ENCODE measurements at regions of chr17 and their contacts with region 1.

Region 1: DNA sequence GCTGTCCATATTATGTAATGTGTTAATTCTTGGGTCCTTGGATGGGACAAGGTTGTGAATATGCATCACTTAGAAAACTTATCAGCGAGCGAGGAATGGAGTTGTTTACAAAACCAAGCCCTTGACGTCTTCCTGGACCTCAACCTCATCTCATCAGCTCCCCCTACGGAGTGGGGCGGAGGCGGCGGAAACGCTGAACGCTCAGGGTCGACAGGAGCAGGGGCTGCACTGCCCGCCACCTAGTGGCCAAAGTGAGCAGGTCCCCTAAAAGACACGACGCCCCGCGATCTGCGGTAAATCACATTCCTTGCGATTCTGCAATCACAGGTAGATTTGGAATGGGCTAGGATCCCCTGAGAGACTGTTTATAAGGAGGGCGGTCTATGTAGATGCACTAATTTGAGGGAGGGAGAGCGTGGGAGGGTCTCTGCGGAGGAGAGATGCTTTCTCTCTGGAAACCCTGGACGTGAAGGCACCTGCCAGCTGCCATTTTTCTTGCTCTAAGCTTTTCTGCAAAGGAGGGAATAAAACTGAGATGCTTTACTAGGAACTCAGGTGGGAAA is 5.4 kb upstream of the ICAM2 start:
- DNase-seq: peak; percentile 89 to 98
- ATAC-seq: peak; percentile 70 to 90 (median 78)
- H3K4me3 ChIP-seq: peak overlapping the region; percentile 7
- H3K4me3 Mint-ChIP-seq: peak overlapping the region; percentile 93
- H3K27ac ChIP-seq: peak overlapping the region; percentile 96
- H3K27ac Mint-ChIP-seq: peak overlapping the region; percentile 98 to 100
- H3K4me1 ChIP-seq: peaks cover 56% of the 10 kb centered on the region
- H3K4me1 Mint-ChIP-seq: peaks cover 48 to 51% of the 10 kb centered on the region in 2 donors
- H3K27me3 ChIP-seq: no peaks in the 10 kb centered on the region
- H3K27me3 Mint-ChIP-seq: no peaks in the 10 kb centered on the region
- CTCF ChIP-seq: peak; percentile 97

Region 2: GRCh38 chr17:62755141-62755851 is 1270.5 kb before region 1 on chr17:
- intact Hi-C with region 1: no loop called
- DNase-seq: no peak
- ATAC-seq: no peak
- H3K4me3 ChIP-seq: no peak overlapping the region
- H3K4me3 Mint-ChIP-seq: no peak overlapping the region
- H3K27ac ChIP-seq: no peak overlapping the region
- H3K27ac Mint-ChIP-seq: no peak overlapping the region
- H3K4me1 ChIP-seq: no peaks in the 10 kb centered on the region
- H3K4me1 Mint-ChIP-seq: no peaks in the 10 kb centered on the region
- H3K27me3 ChIP-seq: no peaks in the 10 kb centered on the region
- H3K27me3 Mint-ChIP-seq: peaks cover 0 to 3% of the 10 kb centered on the region in 2 donors
- CTCF ChIP-seq: no peak

Region 3: GRCh38 chr17:63760771-63761539 is 264.9 kb before region 1 on chr17:
- intact Hi-C with region 1: no loop called
- DNase-seq: no peak
- ATAC-seq: no peak
- H3K4me3 ChIP-seq: no peak overlapping the region
- H3K4me3 Mint-ChIP-seq: no peak overlapping the region
- H3K27ac ChIP-seq: no peak overlapping the region
- H3K27ac Mint-ChIP-seq: peak overlapping the region in 1 of 2 donors; percentile 19
- H3K4me1 ChIP-seq: peaks cover 3% of the 10 kb centered on the region
- H3K4me1 Mint-ChIP-seq: peaks cover 8 to 9% of the 10 kb centered on the region in 2 donors
- H3K27me3 ChIP-seq: no peaks in the 10 kb centered on the region
- H3K27me3 Mint-ChIP-seq: no peaks in the 10 kb centered on the region
- CTCF ChIP-seq: no peak

Region 4: GRCh38 chr17:63946440-63947367 is 79.1 kb before region 1 on chr17:
- intact Hi-C with region 1: no loop called
- DNase-seq: peak; percentile 47 to 83
- ATAC-seq: peak; percentile 69 to 90 (median 83)
- H3K4me3 ChIP-seq: peak overlapping the region; percentile 26
- H3K4me3 Mint-ChIP-seq: peak overlapping the region; percentile 78
- H3K27ac ChIP-seq: peak overlapping the region; percentile 68
- H3K27ac Mint-ChIP-seq: peak overlapping the region; percentile 14 to 81
- H3K4me1 ChIP-seq: peaks cover 41% of the 10 kb centered on the region
- H3K4me1 Mint-ChIP-seq: peaks cover 13 to 24% of the 10 kb centered on the region in 2 donors
- H3K27me3 ChIP-seq: no peaks in the 10 kb centered on the region
- H3K27me3 Mint-ChIP-seq: no peaks in the 10 kb centered on the region
- CTCF ChIP-seq: peak; percentile 80

Region 5: GRCh38 chr17:63984651-63985386 is 41.0 kb before region 1 on chr17:
- intact Hi-C with region 1: loop called (anchors 1 kb)
- DNase-seq: peak; percentile 58 to 80
- ATAC-seq: peak; percentile 91 to 98 (median 98)
- H3K4me3 ChIP-seq: no peak overlapping the region
- H3K4me3 Mint-ChIP-seq: peak overlapping the region; percentile 62
- H3K27ac ChIP-seq: peak overlapping the region; percentile 32
- H3K27ac Mint-ChIP-seq: peak overlapping the region; percentile 67 to 86
- H3K4me1 ChIP-seq: peaks cover 32% of the 10 kb centered on the region
- H3K4me1 Mint-ChIP-seq: peaks cover 14 to 30% of the 10 kb centered on the region in 2 donors
- H3K27me3 ChIP-seq: no peaks in the 10 kb centered on the region
- H3K27me3 Mint-ChIP-seq: no peaks in the 10 kb centered on the region
- CTCF ChIP-seq: no peak

Region 6: GRCh38 chr17:64063766-64064224 is 38.0 kb after region 1 on chr17:
- intact Hi-C with region 1: loop called (anchors 2 kb)
- DNase-seq: peak; percentile 53 to 70
- ATAC-seq: peak; percentile 43 to 62 (median 57)
- H3K4me3 ChIP-seq: peak overlapping the region; percentile 1
- H3K4me3 Mint-ChIP-seq: peak overlapping the region; percentile 59
- H3K27ac ChIP-seq: peak overlapping the region; percentile 84
- H3K27ac Mint-ChIP-seq: peak overlapping the region; percentile 90 to 97
- H3K4me1 ChIP-seq: peaks cover 83% of the 10 kb centered on the region
- H3K4me1 Mint-ChIP-seq: peaks cover 49 to 98% of the 10 kb centered on the region in 2 donors
- H3K27me3 ChIP-seq: no peaks in the 10 kb centered on the region
- H3K27me3 Mint-ChIP-seq: no peaks in the 10 kb centered on the region
- CTCF ChIP-seq: peak; percentile 40

Region 7: DNA sequence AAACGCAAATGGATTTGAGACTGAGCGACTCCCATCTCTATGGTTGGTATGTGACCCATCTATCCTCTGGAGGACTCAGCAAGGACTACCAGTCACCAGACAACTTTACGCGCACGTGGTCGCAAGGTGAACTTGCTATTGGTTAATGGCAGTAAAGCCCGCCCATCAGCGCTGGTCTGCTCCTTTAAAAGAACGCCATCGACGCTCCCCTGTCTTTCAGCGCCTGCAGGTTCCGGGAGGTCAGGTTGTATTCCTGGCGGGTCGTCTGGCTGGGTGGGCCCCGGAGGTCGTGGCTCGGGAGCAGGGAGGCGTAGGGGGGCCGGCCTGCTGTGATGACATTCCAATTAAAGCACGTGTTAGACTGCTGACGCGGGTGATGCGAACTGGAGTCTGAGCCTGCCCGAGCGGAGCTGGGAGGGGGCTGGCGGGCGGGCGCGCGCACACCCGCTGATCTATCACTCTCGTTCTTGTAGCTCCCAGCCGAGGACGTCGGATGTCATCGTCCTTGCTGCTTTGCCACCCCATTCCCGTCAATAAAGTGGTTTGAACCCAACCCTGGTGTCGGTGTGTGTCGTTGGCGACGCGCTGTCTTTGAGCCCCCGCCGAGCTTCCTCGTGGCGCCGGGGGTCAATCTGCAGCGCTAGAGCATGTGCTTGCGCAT is 120.1 kb after region 1 on chr17:
- intact Hi-C with region 1: loop called (anchors 2 kb)
- DNase-seq: peak; percentile 86 to 98
- ATAC-seq: peak; percentile 94 to 100 (median 97)
- H3K4me3 ChIP-seq: peak overlapping the region; percentile 62
- H3K4me3 Mint-ChIP-seq: no peak overlapping the region
- H3K27ac ChIP-seq: peak overlapping the region; percentile 87
- H3K27ac Mint-ChIP-seq: no peak overlapping the region
- H3K4me1 ChIP-seq: peaks cover 20% of the 10 kb centered on the region
- H3K4me1 Mint-ChIP-seq: peaks cover 0 to 8% of the 10 kb centered on the region in 2 donors
- H3K27me3 ChIP-seq: no peaks in the 10 kb centered on the region
- H3K27me3 Mint-ChIP-seq: no peaks in the 10 kb centered on the region
- CTCF ChIP-seq: no peak

Region 8: DNA sequence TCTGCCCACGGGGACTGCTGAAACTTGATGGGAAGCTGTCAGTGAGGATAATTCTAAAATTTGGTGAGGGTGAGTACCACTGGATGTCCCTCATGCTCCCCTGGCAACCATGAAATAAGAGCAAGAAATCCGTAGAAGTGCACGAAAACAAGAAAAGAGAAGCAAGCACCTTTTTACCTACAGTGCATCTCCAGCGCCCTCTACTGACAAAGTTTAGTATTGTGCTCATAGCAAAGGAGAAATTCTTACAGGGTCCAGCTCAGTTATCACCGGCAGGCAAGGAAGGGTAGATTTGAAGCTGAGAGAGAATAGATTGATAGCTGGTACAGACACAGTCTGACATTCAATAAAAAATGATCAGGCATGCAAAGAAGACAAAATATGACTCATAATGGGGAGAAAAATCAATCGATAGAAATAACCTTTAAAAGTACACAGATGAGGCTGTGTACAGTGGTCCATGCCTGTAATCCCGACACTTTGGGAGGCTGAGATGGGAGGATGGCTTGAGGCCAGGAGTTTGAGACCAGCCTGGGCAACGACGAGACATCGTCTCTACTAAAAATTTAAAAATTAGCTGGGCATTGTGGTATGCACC is 265.5 kb after region 1 on chr17:
- intact Hi-C with region 1: no loop called
- DNase-seq: peak in 1 of 2 donors; percentile 17
- ATAC-seq: no peak
- H3K4me3 ChIP-seq: no peak overlapping the region
- H3K4me3 Mint-ChIP-seq: no peak overlapping the region
- H3K27ac ChIP-seq: no peak overlapping the region
- H3K27ac Mint-ChIP-seq: no peak overlapping the region
- H3K4me1 ChIP-seq: no peaks in the 10 kb centered on the region
- H3K4me1 Mint-ChIP-seq: no peaks in the 10 kb centered on the region
- H3K27me3 ChIP-seq: no peaks in the 10 kb centered on the region
- H3K27me3 Mint-ChIP-seq: peaks cover 0 to 6% of the 10 kb centered on the region in 2 donors
- CTCF ChIP-seq: no peak